ENCODE measurements at regions of chr5 and their contacts with region 1.

Region 1: DNA sequence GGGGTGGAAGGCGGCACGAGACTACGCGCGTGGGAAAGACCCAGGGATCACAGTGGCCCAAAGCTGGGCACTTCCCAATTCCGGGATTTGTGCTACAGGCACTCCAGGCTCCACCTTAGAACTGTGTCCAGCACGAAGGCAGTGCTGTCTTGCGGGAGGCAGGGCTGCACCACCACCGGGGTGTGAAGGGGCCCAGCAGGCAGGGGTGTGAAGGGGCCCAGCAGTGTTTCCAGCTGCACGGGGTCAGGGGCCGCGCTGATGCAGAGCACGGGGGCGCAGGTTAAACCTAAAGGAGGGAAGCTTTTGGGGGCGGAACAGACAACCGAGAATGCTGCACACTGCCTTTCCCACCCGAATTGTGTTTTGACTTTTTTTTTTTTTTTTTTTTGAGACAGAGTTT is 1.1 kb upstream of the PDCD6 start:
- DNase-seq: no peak
- ATAC-seq: no peak
- H3K4me3 ChIP-seq: no peak overlapping the region
- H3K27ac ChIP-seq: no peak overlapping the region
- H3K4me1 ChIP-seq: no peaks in the 10 kb centered on the region
- H3K27me3 ChIP-seq: no peaks in the 10 kb centered on the region

Region 2: DNA sequence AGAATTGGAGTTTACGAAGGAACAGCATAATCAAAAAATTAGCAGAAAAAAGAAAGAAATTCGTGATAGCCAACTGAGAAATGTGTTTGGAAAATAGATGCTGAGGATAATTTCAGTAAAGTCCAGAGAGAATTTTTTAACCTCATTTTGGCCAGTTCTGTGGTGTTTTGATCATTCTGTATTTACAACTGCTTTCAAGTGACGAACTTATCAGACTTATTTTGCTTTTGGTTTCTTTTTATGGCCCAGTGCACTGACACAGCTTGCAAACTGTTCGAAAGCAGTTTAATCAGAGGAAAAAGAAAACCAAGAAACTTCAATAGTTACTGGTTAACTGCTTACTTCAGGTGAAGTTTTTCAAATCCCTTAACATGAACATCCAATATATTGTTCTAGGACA is 50.3 kb before region 1 on chr5:
- intact Hi-C with region 1: loop called in 1 of 2 experiments (anchors 10 kb)
- DNase-seq: no peak
- ATAC-seq: no peak
- H3K4me3 ChIP-seq: peak overlapping the region; percentile 46 to 88
- H3K27ac ChIP-seq: no peak overlapping the region
- H3K4me1 ChIP-seq: no peaks in the 10 kb centered on the region
- H3K27me3 ChIP-seq: no peaks in the 10 kb centered on the region

Region 3: DNA sequence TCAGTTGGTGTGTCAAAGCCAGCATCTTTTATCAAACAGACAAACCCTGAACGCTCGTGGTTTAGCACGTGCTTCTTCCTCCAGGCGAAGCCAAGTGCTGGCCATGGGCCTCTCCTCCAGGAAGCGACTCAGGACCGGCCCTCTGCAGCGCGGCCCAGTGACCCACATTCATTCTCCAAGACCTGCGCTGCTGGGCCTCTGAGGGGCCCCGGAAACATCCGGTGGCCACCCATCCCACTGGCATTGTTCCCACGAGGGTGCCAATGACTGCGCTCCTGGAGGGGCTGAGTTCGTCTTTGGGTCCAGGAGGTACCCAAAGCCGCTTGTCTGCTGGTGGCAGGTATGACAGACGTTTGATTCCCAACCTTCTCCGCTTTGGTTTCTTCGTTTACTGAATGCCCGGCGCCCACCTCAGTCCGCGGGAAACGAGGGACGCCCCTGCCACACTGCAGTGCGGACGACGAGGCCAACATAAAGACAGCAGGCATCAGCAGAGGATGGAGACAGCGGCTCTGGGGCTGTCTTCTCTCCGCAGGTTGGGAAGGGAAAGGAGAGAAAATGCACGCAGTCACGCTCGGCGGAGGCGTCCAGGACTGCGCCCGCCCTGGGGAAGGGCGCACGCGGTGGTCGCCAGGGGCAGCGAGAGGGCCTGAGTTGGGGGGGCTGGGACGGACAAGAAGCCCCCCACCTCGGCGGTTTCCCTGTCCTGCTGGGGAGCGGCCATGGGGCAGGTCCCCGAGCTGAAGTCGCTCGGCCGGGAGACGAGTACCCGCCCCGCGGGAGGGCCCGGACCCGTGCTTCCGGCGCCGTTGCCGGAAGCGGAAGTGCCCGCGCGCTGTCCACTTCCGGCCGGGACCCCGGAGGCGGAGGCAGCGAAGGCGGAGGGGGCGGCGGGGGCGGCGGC is 172.2 kb after region 1 on chr5 and contains the start of gene EXOC3:
- intact Hi-C with region 1: loop called in 1 of 2 experiments (anchors 5 kb)
- DNase-seq: peak; percentile 82 to 92
- ATAC-seq: peak; percentile 92
- H3K4me3 ChIP-seq: peak within 1 kb of the TSS; percentile 59 to 71
- H3K27ac ChIP-seq: peak within 1 kb of the TSS in 1 of 2 donors; percentile 19
- H3K4me1 ChIP-seq: no peaks in the 10 kb centered on the region
- H3K27me3 ChIP-seq: no peaks in the 10 kb centered on the region
- total RNA-seq, gene EXOC3: 54.6 to 65.2 TPM

Measured in aorta (tissue), 5 donors.